Activated CD8-positive, alpha-beta T cell treated with anti-CD3 and anti-CD28 coated beads for 36 hours (primary cell): ENCODE measurements at regions of chr1 and their contacts with region 1.

Region 1: DNA sequence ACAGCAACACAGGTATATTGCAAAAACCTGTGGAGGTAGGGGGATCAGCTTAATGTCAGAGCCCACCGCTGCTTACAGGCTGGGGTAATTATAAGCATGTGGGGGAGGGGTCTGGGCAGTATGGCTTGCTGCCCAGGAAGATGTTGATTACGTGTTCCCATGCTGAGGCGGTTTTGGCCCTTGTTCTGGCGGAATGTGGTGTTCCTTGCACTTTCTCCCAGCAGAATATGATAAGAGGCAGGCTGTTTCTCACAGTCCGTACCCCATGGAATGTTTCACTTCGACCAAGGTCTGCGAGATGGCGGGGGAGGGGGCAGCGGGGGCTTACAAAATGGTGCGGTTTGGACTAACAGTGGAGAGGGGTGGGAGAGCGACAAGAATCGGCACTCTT is 9.8 kb upstream of the HPCAL4 start:
- DNase-seq: no peak
- ATAC-seq: no peak
- H3K4me3 Mint-ChIP-seq: no peak overlapping the region
- H3K27ac Mint-ChIP-seq: no peak overlapping the region
- H3K4me1 Mint-ChIP-seq: no peaks in the 10 kb centered on the region
- H3K27me3 Mint-ChIP-seq: peaks cover 14% of the 10 kb centered on the region
- CTCF ChIP-seq: no peak

Region 2: GRCh38 chr1:39711104-39711965 is 10.3 kb after region 1 on chr1:
- CTCF ChIA-PET with region 1: interaction called, 12 read pairs
- POLR2A ChIA-PET with region 1: no interaction called
- intact Hi-C with region 1: no loop called
- DNase-seq: no peak
- ATAC-seq: no peak
- H3K4me3 Mint-ChIP-seq: no peak overlapping the region
- H3K27ac Mint-ChIP-seq: no peak overlapping the region
- H3K4me1 Mint-ChIP-seq: no peaks in the 10 kb centered on the region
- H3K27me3 Mint-ChIP-seq: peaks cover 18% of the 10 kb centered on the region
- CTCF ChIP-seq: no peak

Region 3: DNA sequence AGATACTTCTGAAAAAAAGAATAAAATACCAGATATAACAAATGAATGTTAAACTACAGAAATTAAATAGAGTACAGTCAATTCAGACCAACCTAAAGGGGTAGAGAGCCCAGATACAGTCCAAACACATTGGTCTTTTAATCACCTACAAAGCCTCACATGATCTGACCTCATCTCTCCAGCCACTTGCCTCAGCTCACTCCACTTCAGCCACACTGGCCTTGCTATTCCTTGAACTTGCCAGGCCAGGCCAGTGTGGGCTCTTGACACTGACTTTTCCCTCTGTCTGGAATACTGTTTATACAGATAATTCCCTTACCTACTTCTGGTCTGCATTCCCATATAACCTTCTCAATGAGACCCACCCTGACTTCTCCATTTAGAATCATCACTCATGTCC is 20.6 kb after region 1 on chr1:
- CTCF ChIA-PET with region 1: no interaction called
- POLR2A ChIA-PET with region 1: no interaction called
- intact Hi-C with region 1: no loop called
- DNase-seq: no peak
- ATAC-seq: no peak
- H3K4me3 Mint-ChIP-seq: no peak overlapping the region
- H3K27ac Mint-ChIP-seq: no peak overlapping the region
- H3K4me1 Mint-ChIP-seq: no peaks in the 10 kb centered on the region
- H3K27me3 Mint-ChIP-seq: peaks cover 41% of the 10 kb centered on the region
- CTCF ChIP-seq: no peak

Region 4: GRCh38 chr1:39753132-39754025 is 52.3 kb after region 1 on chr1:
- CTCF ChIA-PET with region 1: no interaction called
- POLR2A ChIA-PET with region 1: no interaction called
- intact Hi-C with region 1: no loop called
- DNase-seq: no peak
- ATAC-seq: no peak
- H3K4me3 Mint-ChIP-seq: no peak overlapping the region
- H3K27ac Mint-ChIP-seq: no peak overlapping the region
- H3K4me1 Mint-ChIP-seq: no peaks in the 10 kb centered on the region
- H3K27me3 Mint-ChIP-seq: no peaks in the 10 kb centered on the region
- CTCF ChIP-seq: no peak